ENCODE measurements at regions of chr1 and their contacts with region 1.

Region 1: DNA sequence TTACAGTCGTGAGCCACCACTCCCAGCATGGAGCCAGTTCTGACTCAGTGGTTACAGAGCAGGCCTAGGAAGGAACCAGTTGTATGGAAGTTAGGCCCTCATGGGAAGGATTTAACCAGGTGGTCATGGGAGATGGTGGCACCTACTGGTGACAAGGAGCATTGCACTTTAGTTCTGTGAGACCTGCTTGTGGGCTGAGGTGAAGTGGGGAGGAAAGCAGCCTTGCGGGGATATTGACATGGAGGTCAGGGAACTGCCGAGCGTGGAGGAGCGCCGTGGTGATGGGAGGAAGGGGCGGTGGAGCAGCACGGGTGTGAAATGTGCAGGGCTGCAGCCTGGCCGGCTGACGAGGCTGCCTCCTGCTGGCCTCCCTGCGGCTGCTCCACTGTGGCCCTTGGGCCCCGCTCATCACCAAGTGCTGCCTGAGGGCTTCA is 100.4 kb downstream of the GALNT2 start:
- DNase-seq: peak; percentile 50
- H3K4me3 Mint-ChIP-seq: no peak overlapping the region
- H3K27ac Mint-ChIP-seq: no peak overlapping the region
- H3K4me1 Mint-ChIP-seq: peaks cover 27% of the 10 kb centered on the region
- H3K27me3 Mint-ChIP-seq: no peaks in the 10 kb centered on the region

Region 2: DNA sequence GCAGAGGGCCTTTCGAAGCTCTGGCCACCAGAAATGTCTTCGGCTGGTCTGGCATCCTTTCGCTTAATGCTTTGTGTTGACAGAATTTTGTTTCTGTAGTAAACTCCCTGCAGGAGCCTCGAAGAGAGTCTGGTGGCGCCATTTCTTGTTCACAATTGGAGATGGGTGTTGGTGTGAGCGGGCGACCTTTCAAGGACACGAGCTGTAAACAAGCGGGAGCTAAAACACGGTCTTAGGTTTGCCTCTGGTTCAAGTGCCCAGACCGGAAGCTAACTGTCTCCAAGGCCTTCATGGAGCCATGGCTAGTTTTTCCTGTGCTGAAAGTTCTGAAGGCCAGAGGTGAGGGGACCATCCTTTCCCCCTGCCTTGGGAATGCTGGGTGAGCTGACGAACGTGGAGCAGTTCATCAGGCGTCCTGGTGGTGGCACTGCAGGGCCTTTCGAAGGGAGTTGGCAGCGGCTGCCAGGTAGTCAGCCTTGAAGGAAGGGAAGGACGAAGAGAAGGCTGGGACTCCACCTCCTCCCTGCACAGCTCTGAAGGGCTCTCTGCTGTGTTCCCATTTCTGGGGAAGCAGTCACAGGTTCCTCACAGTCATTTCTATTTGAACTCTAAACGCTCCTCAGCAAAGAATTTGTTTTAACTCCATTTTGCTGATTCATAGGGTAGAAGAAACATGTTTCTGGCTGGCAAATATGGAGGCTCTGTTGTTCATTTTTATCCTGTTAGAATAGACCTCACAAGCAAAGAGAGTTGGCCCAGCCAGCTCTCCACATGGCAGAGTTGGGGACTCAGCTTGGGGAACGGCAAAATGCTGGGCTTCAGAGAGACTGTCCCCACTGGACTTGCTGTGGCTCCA is 506.2 kb before region 1 on chr1:
- CTCF ChIA-PET with region 1: interaction called, 11 read pairs
- DNase-seq: peak; percentile 77
- H3K4me3 Mint-ChIP-seq: no peak overlapping the region
- H3K27ac Mint-ChIP-seq: no peak overlapping the region
- H3K4me1 Mint-ChIP-seq: peaks cover 5% of the 10 kb centered on the region
- H3K27me3 Mint-ChIP-seq: no peaks in the 10 kb centered on the region

Region 3: DNA sequence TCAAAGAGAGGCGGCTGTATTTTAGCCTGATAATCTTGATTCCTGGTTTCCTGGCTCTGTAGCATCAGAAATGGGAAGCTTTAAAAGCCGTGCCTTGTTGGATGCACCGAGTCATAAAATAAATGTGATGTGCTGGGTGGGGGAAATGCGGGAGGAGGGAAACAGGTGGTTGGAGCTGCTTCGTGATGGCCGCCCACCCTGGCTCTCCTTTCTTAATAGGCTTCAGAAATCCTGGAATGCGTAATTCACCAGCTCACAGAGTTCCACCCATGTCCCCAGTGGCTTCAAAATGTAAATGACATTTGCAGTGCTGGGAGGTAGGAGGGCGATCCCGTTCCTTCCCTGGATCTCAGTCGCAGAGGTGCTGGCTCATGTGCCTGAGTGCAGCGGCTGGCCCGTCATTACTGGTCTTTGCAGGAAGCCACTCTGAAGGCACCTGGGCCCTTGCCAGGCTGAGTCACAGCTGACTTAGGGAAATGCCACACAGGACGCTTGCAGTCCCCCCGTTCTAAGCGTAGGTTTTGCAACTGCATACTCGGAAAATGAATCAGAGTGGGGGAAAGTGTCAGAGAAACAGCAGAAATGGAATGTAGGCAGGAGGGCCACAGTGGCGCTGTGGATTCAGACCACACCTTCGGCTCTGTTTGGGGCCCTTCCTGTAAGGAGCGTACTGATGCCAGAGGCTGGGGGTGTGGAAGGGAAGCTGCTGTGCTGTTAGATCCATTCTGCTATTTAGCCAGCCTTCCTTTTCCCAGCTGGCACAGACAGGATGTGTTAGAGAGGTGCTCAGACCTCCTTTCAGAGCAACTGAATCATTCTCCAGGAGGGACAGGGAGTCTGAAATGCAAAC is 62.8 kb before region 1 on chr1:
- CTCF ChIA-PET with region 1: interaction called, 10 read pairs
- DNase-seq: peak; percentile 65
- H3K4me3 Mint-ChIP-seq: no peak overlapping the region
- H3K27ac Mint-ChIP-seq: peak overlapping the region; percentile 64
- H3K4me1 Mint-ChIP-seq: peaks cover 77% of the 10 kb centered on the region
- H3K27me3 Mint-ChIP-seq: no peaks in the 10 kb centered on the region

Region 4: GRCh38 chr1:230120926-230121381 is 46.5 kb before region 1 on chr1:
- CTCF ChIA-PET with region 1: interaction called, 14 read pairs
- DNase-seq: peak; percentile 37
- H3K4me3 Mint-ChIP-seq: no peak overlapping the region
- H3K27ac Mint-ChIP-seq: no peak overlapping the region
- H3K4me1 Mint-ChIP-seq: peaks cover 46% of the 10 kb centered on the region
- H3K27me3 Mint-ChIP-seq: no peaks in the 10 kb centered on the region

Region 5: DNA sequence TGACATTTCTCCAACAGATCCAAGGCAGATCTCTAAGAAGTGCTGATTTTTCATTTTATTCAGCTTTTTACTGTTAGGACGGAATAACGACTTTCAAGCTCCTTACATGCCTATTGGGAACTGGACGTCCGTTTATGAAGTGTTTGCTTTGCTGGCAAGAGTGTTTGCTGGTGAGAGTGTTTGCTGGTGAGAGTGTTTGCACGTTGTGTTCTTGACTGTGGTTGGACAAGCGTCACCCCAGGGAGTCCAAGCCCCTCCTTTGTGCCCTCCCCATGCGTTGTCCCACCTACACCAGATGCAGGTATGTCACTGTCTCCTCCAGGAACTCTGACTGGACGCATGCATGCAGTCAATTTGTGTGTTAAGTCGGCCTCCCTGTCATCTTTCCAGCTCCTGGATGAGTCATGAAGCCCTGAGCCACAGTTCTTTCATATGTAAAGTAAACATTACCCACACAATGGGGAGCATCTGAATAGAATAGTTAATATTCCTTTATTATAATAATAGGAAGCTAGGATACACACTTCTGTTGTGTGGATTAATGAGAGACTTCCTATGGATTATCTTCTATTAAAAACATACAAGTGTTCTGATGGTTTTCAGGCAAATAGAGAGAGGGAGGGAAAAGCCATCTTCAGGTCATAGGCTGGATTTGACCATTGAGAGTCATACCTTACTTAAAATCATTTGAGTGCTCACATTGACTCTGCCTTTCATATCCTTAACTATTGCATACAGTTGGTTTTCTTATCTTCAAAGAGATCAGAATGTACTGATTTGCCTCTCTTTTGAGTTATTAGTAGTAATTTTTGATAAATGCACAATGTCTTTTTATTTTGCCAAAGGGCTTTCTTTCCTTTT is 18.8 kb after region 1 on chr1:
- CTCF ChIA-PET with region 1: interaction called, 10 read pairs
- DNase-seq: no peak
- H3K4me3 Mint-ChIP-seq: no peak overlapping the region
- H3K27ac Mint-ChIP-seq: peak overlapping the region; percentile 12
- H3K4me1 Mint-ChIP-seq: peaks cover 35% of the 10 kb centered on the region
- H3K27me3 Mint-ChIP-seq: no peaks in the 10 kb centered on the region

Region 6: GRCh38 chr1:230292689-230293389 is 125.4 kb after region 1 on chr1:
- CTCF ChIA-PET with region 1: no interaction called
- DNase-seq: peak; percentile 3
- H3K4me3 Mint-ChIP-seq: no peak overlapping the region
- H3K27ac Mint-ChIP-seq: no peak overlapping the region
- H3K4me1 Mint-ChIP-seq: peaks cover 2% of the 10 kb centered on the region
- H3K27me3 Mint-ChIP-seq: peaks cover 48% of the 10 kb centered on the region

Region 7: GRCh38 chr1:230476622-230477003 is 309.2 kb after region 1 on chr1:
- CTCF ChIA-PET with region 1: no interaction called
- DNase-seq: no peak
- H3K4me3 Mint-ChIP-seq: no peak overlapping the region
- H3K27ac Mint-ChIP-seq: no peak overlapping the region
- H3K4me1 Mint-ChIP-seq: no peaks in the 10 kb centered on the region
- H3K27me3 Mint-ChIP-seq: peaks cover 30% of the 10 kb centered on the region

Measured in activated naive CD4-positive, alpha-beta T cell treated with anti-CD3 and anti-CD28 coated beads, Interleukin-2, amount 10 ng/mL, durations not matched to agents 7 days and 5 days (primary cell).